H1 (cell line): ENCODE measurements at regions of chr5 and their contacts with region 1.

Region 1: GRCh38 chr5:15026011-15026893 is 154.7 kb upstream of the ANKH start:
- DNase-seq: no peak
- H3K4me3 ChIP-seq: peak overlapping the region in 1 of 4 experiments; percentile 25; a peak in 2 of 8 replicates
- H3K27ac ChIP-seq: no peak overlapping the region
- H3K4me1 ChIP-seq: peaks cover 4 to 9% (median 6%) of the 10 kb centered on the region in 4 experiments
- H3K27me3 ChIP-seq: peaks cover 31 to 53% (median 43%) of the 10 kb centered on the region in 4 experiments
- CTCF ChIP-seq: no peak
- EP300 ChIP-seq: no peak
- POLR2A ChIP-seq: no peak
- RAD21 ChIP-seq: no peak

Region 2: DNA sequence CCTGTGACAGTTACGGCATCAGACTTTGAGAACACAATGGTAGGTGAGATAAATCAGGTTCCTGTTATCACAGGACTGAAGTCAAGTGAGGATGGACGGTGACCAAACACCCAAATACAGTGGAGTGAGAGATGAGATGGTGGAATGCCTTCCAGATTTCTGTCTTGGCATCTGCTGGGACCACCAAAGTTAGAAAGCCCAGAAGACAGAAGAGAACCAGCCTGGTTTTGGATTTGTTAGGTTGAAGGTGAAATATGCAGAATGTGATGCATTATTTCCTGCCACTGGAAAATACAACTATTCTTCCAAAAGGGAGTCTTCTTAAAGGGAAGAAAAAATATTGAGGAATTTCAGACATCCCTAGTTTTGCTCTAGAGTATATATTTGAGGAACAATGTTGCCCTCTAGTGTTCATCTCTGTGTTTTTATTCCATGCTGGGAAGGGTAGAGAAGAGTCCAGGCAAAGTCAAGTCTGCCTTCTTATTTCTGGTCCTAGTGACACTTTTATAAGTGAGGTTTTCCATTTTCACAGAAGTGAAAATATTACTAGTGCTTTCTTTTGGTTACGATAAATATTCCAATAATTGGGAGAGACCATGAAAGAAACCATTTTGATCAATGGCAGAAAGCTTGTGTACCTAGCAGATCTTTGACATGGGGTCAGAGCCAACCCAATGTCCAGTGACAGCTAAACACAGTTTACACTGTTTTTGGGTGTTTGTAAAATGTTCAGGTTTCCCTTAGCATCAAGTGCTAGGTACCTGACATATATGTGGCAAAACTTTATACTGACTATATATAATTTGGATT is 12.4 kb before region 1 on chr5:
- CTCF ChIA-PET with region 1: interaction called, 11 read pairs
- POLR2A ChIA-PET with region 1: no interaction called
- DNase-seq: no peak
- H3K4me3 ChIP-seq: no peak overlapping the region
- H3K27ac ChIP-seq: no peak overlapping the region
- H3K4me1 ChIP-seq: peaks cover 0 to 2% (median 0%) of the 10 kb centered on the region in 4 experiments; a peak in 2 of 7 replicates
- H3K27me3 ChIP-seq: no peaks in the 10 kb centered on the region
- CTCF ChIP-seq: peak in 2 of 3 experiments; percentile 35 to 63; a peak in 2 of 4 replicates
- EP300 ChIP-seq: no peak
- POLR2A ChIP-seq: no peak
- RAD21 ChIP-seq: peak; percentile 74 to 78